Mammary epithelial cell (primary cell): ENCODE measurements at regions of chr17 and their contacts with region 1.

Region 1: GRCh38 chr17:72407336-72407909 is 286.6 kb downstream of the SOX9 start:
- DNase-seq: peak; percentile 98
- H3K4me3 ChIP-seq: no peak overlapping the region
- H3K27ac ChIP-seq: peak overlapping the region; percentile 92
- H3K4me1 ChIP-seq: peaks cover 52% of the 10 kb centered on the region
- H3K27me3 ChIP-seq: no peaks in the 10 kb centered on the region
- CTCF ChIP-seq: no peak

Region 2: GRCh38 chr17:72373910-72374741 is 33.3 kb before region 1 on chr17:
- CTCF ChIA-PET with region 1: no interaction called
- dilution Hi-C with region 1: loop called (anchors 5 kb)
- in situ Hi-C with region 1: no loop called
- intact Hi-C with region 1: no loop called
- DNase-seq: no peak
- H3K4me3 ChIP-seq: no peak overlapping the region
- H3K27ac ChIP-seq: no peak overlapping the region
- H3K4me1 ChIP-seq: peaks cover 3% of the 10 kb centered on the region
- H3K27me3 ChIP-seq: no peaks in the 10 kb centered on the region
- CTCF ChIP-seq: no peak

Region 3: GRCh38 chr17:72392056-72393010 is 15.1 kb before region 1 on chr17:
- CTCF ChIA-PET with region 1: no interaction called
- dilution Hi-C with region 1: no loop called
- in situ Hi-C with region 1: no loop called
- intact Hi-C with region 1: loop called (anchors 1 kb)
- DNase-seq: no peak
- H3K4me3 ChIP-seq: no peak overlapping the region
- H3K27ac ChIP-seq: peak overlapping the region; percentile 76
- H3K4me1 ChIP-seq: peaks cover 68% of the 10 kb centered on the region
- H3K27me3 ChIP-seq: no peaks in the 10 kb centered on the region
- CTCF ChIP-seq: no peak

Region 4: GRCh38 chr17:72465191-72466024 is 58.0 kb after region 1 on chr17:
- CTCF ChIA-PET with region 1: no interaction called
- dilution Hi-C with region 1: loop called (anchors 5 kb)
- in situ Hi-C with region 1: no loop called
- intact Hi-C with region 1: no loop called
- DNase-seq: peak; percentile 99
- H3K4me3 ChIP-seq: peak overlapping the region in 1 of 3 experiments; percentile 2
- H3K27ac ChIP-seq: peak overlapping the region; percentile 98
- H3K4me1 ChIP-seq: peaks cover 64% of the 10 kb centered on the region
- H3K27me3 ChIP-seq: no peaks in the 10 kb centered on the region
- CTCF ChIP-seq: no peak